B cell (primary cell): ENCODE measurements at regions of chr11 and their contacts with region 1.

Region 1: GRCh38 chr11:117946842-117947526 is 17.8 kb upstream of the TMPRSS13 start:
- DNase-seq: peak; percentile 83
- ATAC-seq: peak; percentile 32
- H3K4me3 ChIP-seq: no peak overlapping the region
- H3K4me3 Mint-ChIP-seq: no peak overlapping the region
- H3K27ac ChIP-seq: no peak overlapping the region
- H3K27ac Mint-ChIP-seq: peak overlapping the region; percentile 60
- H3K4me1 ChIP-seq: peaks cover 33 to 46% of the 10 kb centered on the region in 2 donors
- H3K4me1 Mint-ChIP-seq: peaks cover 38% of the 10 kb centered on the region
- H3K27me3 ChIP-seq: no peaks in the 10 kb centered on the region
- H3K27me3 Mint-ChIP-seq: peaks cover 9% of the 10 kb centered on the region
- CTCF ChIP-seq: peak; percentile 98

Region 2: GRCh38 chr11:117786135-117786890 is 160.7 kb before region 1 on chr11:
- CTCF ChIA-PET with region 1: no interaction called
- POLR2A ChIA-PET with region 1: no interaction called
- intact Hi-C with region 1: no loop called
- DNase-seq: no peak
- ATAC-seq: no peak
- H3K4me3 ChIP-seq: no peak overlapping the region
- H3K4me3 Mint-ChIP-seq: no peak overlapping the region
- H3K27ac ChIP-seq: no peak overlapping the region
- H3K27ac Mint-ChIP-seq: no peak overlapping the region
- H3K4me1 ChIP-seq: no peaks in the 10 kb centered on the region
- H3K4me1 Mint-ChIP-seq: no peaks in the 10 kb centered on the region
- H3K27me3 ChIP-seq: peaks cover 0 to 18% (median 3%) of the 10 kb centered on the region in 4 experiments
- H3K27me3 Mint-ChIP-seq: peaks cover 72% of the 10 kb centered on the region
- CTCF ChIP-seq: no peak

Region 3: DNA sequence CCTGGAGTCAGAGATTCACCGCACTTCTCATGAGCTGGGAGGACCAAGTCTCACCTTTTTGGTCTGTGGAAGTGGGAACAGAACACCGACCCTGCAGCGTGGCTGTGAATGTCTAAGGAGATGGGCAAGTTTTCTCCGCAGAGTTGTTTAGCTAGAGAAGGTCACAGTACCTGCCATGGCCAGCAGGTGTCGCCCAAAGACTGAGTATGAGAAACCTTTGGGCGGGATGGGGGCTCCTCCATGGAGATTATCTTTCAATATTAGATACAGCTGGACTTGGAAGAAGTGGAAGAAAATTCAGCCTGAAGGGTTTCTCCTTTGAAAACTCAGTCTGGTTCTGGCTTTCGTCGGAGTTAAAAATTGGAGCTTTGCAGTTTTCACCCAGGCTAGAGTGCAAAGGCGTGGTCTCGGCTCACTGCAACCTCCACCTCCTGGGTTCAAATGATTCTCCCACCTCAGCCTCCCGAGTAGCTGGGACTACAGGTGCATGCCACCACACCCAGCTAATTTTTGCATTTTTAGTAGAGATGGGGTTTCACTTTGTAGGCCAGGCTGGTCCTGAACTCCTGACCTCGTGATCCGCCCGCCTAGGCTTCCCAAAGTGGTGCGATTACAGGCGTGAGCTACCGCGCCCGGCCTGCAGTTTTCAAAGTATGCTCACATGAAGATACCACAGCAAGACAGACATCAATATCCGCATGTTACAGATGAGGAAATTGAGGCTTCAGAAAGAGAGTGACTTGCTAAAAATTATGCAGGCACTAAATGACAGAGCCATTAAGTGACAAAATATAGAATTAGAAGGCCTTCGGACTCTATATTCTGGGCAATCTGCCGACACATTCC is 139.3 kb before region 1 on chr11:
- CTCF ChIA-PET with region 1: interaction called, 134 read pairs
- POLR2A ChIA-PET with region 1: no interaction called
- intact Hi-C with region 1: loop called (anchors 1 kb)
- DNase-seq: peak; percentile 80
- ATAC-seq: peak; percentile 81
- H3K4me3 ChIP-seq: no peak overlapping the region
- H3K4me3 Mint-ChIP-seq: no peak overlapping the region
- H3K27ac ChIP-seq: no peak overlapping the region
- H3K27ac Mint-ChIP-seq: no peak overlapping the region
- H3K4me1 ChIP-seq: peaks cover 0 to 9% of the 10 kb centered on the region in 2 donors
- H3K4me1 Mint-ChIP-seq: peaks cover 5% of the 10 kb centered on the region
- H3K27me3 ChIP-seq: peaks cover 0 to 9% (median 0%) of the 10 kb centered on the region in 4 experiments
- H3K27me3 Mint-ChIP-seq: peaks cover 10% of the 10 kb centered on the region
- CTCF ChIP-seq: peak; percentile 97

Region 4: GRCh38 chr11:117843666-117844484 is 103.1 kb before region 1 on chr11:
- CTCF ChIA-PET with region 1: interaction called, 176 read pairs
- POLR2A ChIA-PET with region 1: no interaction called
- intact Hi-C with region 1: loop called (anchors 1 kb)
- DNase-seq: peak; percentile 84
- ATAC-seq: peak; percentile 93
- H3K4me3 ChIP-seq: no peak overlapping the region
- H3K4me3 Mint-ChIP-seq: no peak overlapping the region
- H3K27ac ChIP-seq: no peak overlapping the region
- H3K27ac Mint-ChIP-seq: no peak overlapping the region
- H3K4me1 ChIP-seq: peaks cover 0 to 3% of the 10 kb centered on the region in 2 donors
- H3K4me1 Mint-ChIP-seq: no peaks in the 10 kb centered on the region
- H3K27me3 ChIP-seq: no peaks in the 10 kb centered on the region
- H3K27me3 Mint-ChIP-seq: peaks cover 5% of the 10 kb centered on the region
- CTCF ChIP-seq: peak; percentile 99

Region 5: GRCh38 chr11:117932067-117932370 is 15.0 kb before region 1 on chr11:
- CTCF ChIA-PET with region 1: interaction called, 45 read pairs
- POLR2A ChIA-PET with region 1: interaction called, 3 read pairs
- intact Hi-C with region 1: no loop called
- DNase-seq: no peak
- ATAC-seq: no peak
- H3K4me3 ChIP-seq: no peak overlapping the region
- H3K4me3 Mint-ChIP-seq: no peak overlapping the region
- H3K27ac ChIP-seq: no peak overlapping the region
- H3K27ac Mint-ChIP-seq: no peak overlapping the region
- H3K4me1 ChIP-seq: peaks cover 11 to 20% of the 10 kb centered on the region in 2 donors
- H3K4me1 Mint-ChIP-seq: peaks cover 16% of the 10 kb centered on the region
- H3K27me3 ChIP-seq: no peaks in the 10 kb centered on the region
- H3K27me3 Mint-ChIP-seq: peaks cover 9% of the 10 kb centered on the region
- CTCF ChIP-seq: no peak

Region 6: GRCh38 chr11:117985953-117986887 is 39.2 kb after region 1 on chr11 and contains the start of gene IL10RA:
- CTCF ChIA-PET with region 1: interaction called, 110 read pairs
- POLR2A ChIA-PET with region 1: interaction called, 87 read pairs
- intact Hi-C with region 1: loop called (anchors 1 kb)
- DNase-seq: peak; percentile 92
- ATAC-seq: peak; percentile 92
- H3K4me3 ChIP-seq: peak within 1 kb of the TSS; percentile 82 to 99 (median 98)
- H3K4me3 Mint-ChIP-seq: peak within 1 kb of the TSS; percentile 92
- H3K27ac ChIP-seq: peak within 1 kb of the TSS; percentile 93 to 94
- H3K27ac Mint-ChIP-seq: peak within 1 kb of the TSS; percentile 94
- H3K4me1 ChIP-seq: peaks cover 54 to 75% of the 10 kb centered on the region in 2 donors
- H3K4me1 Mint-ChIP-seq: peaks cover 76% of the 10 kb centered on the region
- H3K27me3 ChIP-seq: no peaks in the 10 kb centered on the region
- H3K27me3 Mint-ChIP-seq: no peaks in the 10 kb centered on the region
- CTCF ChIP-seq: no peak
- total RNA-seq, gene IL10RA: 417 and 434 TPM in 2 replicates

Region 7: GRCh38 chr11:118010738-118011461 is 63.9 kb after region 1 on chr11:
- CTCF ChIA-PET with region 1: interaction called, 22 read pairs
- POLR2A ChIA-PET with region 1: interaction called, 23 read pairs
- intact Hi-C with region 1: loop called (anchors 1 kb)
- DNase-seq: peak; percentile 96
- ATAC-seq: peak; percentile 73
- H3K4me3 ChIP-seq: peak overlapping the region in 2 of 5 experiments; percentile 2 to 38
- H3K4me3 Mint-ChIP-seq: peak overlapping the region; percentile 75
- H3K27ac ChIP-seq: peak overlapping the region; percentile 95 to 99
- H3K27ac Mint-ChIP-seq: peak overlapping the region; percentile 99
- H3K4me1 ChIP-seq: peaks cover 99 to 100% of the 10 kb centered on the region in 2 donors
- H3K4me1 Mint-ChIP-seq: peaks cover 100% of the 10 kb centered on the region
- H3K27me3 ChIP-seq: no peaks in the 10 kb centered on the region
- H3K27me3 Mint-ChIP-seq: no peaks in the 10 kb centered on the region
- CTCF ChIP-seq: no peak

Region 8: DNA sequence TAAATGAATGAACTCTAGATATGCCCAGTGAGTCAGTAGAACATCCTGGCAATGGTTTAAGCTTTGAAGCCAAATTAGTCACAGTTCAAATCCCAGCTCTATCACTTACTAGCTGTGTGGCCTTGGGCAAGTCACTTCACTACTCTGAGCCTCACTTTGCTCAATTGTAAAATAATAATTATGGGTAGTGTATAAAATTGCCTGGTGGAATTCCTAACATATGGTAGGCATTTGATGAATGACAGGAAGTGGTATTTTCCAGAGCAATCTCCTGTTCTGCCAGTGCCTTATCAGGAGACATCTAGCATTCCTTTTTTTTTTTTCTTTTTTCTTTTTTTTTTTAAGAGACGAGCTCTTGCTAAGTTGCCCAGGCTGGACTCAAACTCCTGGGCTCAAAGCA is 192.6 kb after region 1 on chr11:
- CTCF ChIA-PET with region 1: no interaction called
- POLR2A ChIA-PET with region 1: no interaction called
- intact Hi-C with region 1: no loop called
- DNase-seq: no peak
- ATAC-seq: no peak
- H3K4me3 ChIP-seq: no peak overlapping the region
- H3K4me3 Mint-ChIP-seq: no peak overlapping the region
- H3K27ac ChIP-seq: no peak overlapping the region
- H3K27ac Mint-ChIP-seq: no peak overlapping the region
- H3K4me1 ChIP-seq: no peaks in the 10 kb centered on the region
- H3K4me1 Mint-ChIP-seq: no peaks in the 10 kb centered on the region
- H3K27me3 ChIP-seq: peaks cover 0 to 31% (median 9%) of the 10 kb centered on the region in 4 experiments
- H3K27me3 Mint-ChIP-seq: peaks cover 64% of the 10 kb centered on the region
- CTCF ChIP-seq: no peak

Region 9: GRCh38 chr11:118198370-118198769 is 251.4 kb after region 1 on chr11:
- CTCF ChIA-PET with region 1: no interaction called
- POLR2A ChIA-PET with region 1: no interaction called
- intact Hi-C with region 1: no loop called
- DNase-seq: peak; percentile 84
- ATAC-seq: peak; percentile 75
- H3K4me3 ChIP-seq: peak overlapping the region in 1 of 5 experiments; percentile 21
- H3K4me3 Mint-ChIP-seq: peak overlapping the region; percentile 44
- H3K27ac ChIP-seq: no peak overlapping the region
- H3K27ac Mint-ChIP-seq: no peak overlapping the region
- H3K4me1 ChIP-seq: peaks cover 0 to 3% of the 10 kb centered on the region in 2 donors
- H3K4me1 Mint-ChIP-seq: no peaks in the 10 kb centered on the region
- H3K27me3 ChIP-seq: peaks cover 0 to 15% (median 2%) of the 10 kb centered on the region in 4 experiments
- H3K27me3 Mint-ChIP-seq: peaks cover 3% of the 10 kb centered on the region
- CTCF ChIP-seq: peak; percentile 93